ENCODE measurements at regions of chr3 and their contacts with region 1.

Region 1: GRCh38 chr3:38738630-38739395 is 77.2 kb downstream of the SCN10A start:
- DNase-seq: peak; percentile 47
- ATAC-seq: no peak
- H3K4me3 Mint-ChIP-seq: no peak overlapping the region
- H3K27ac Mint-ChIP-seq: no peak overlapping the region
- H3K4me1 Mint-ChIP-seq: no peaks in the 10 kb centered on the region
- H3K27me3 Mint-ChIP-seq: peaks cover 16% of the 10 kb centered on the region

Region 2: DNA sequence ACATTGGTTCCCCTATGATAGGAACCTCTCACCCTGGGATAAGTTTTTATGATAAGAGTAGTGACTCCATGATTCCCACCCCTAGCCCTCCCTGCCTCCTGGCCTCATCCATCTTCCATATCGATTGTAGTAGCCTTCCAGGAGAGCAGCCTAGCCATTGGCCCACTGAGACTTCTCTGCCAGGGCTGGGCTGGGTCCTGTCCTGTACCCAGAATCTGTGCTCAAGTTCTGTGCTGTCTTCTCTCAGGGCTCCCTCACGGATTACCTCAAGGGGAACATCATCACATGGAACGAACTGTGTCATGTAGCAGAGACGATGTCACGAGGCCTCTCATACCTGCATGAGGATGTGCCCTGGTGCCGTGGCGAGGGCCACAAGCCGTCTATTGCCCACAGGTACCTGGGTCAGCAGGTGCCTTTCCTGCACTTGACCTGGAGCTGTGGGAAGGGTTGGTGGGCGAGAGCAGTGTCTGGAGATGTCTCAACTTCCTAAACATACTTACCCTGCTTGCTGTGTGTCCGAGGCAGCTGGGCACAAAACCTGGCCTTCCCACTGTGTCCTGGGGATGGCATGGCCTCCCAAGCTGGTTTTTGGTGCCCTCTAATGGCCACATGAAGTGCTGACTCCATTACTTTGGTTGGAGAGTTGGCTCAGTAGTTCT is 259.3 kb before region 1 on chr3:
- CTCF ChIA-PET with region 1: no interaction called
- POLR2A ChIA-PET with region 1: no interaction called
- DNase-seq: peak; percentile 59
- ATAC-seq: peak; percentile 71
- H3K4me3 Mint-ChIP-seq: no peak overlapping the region
- H3K27ac Mint-ChIP-seq: no peak overlapping the region
- H3K4me1 Mint-ChIP-seq: no peaks in the 10 kb centered on the region
- H3K27me3 Mint-ChIP-seq: no peaks in the 10 kb centered on the region

Region 3: DNA sequence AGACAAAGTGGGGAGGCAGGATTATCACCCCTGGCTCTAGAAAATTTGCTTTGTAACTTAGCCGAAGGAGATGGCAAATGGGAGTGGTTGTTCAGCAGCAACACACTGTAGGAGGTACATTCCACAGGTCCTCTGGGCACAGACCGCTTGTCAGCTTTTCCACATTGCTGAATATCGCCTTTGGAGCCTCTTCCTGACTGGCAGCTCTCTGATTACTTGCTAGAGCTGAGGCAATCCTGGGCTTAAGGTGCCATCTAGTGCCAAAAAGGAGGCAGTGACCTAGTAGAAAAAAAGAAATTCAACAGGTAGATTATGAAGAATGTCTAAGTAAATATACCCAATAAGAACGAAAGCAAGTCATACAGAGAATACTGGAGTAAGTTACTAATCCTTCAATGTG is 76.3 kb before region 1 on chr3:
- CTCF ChIA-PET with region 1: no interaction called
- POLR2A ChIA-PET with region 1: no interaction called
- DNase-seq: no peak
- ATAC-seq: no peak
- H3K4me3 Mint-ChIP-seq: no peak overlapping the region
- H3K27ac Mint-ChIP-seq: no peak overlapping the region
- H3K4me1 Mint-ChIP-seq: no peaks in the 10 kb centered on the region
- H3K27me3 Mint-ChIP-seq: peaks cover 30% of the 10 kb centered on the region

Region 4: GRCh38 chr3:38837358-38837757 is 98.5 kb after region 1 on chr3:
- CTCF ChIA-PET with region 1: interaction called, 17 read pairs
- POLR2A ChIA-PET with region 1: interaction called, 3 read pairs
- DNase-seq: no peak
- ATAC-seq: no peak
- H3K4me3 Mint-ChIP-seq: no peak overlapping the region
- H3K27ac Mint-ChIP-seq: no peak overlapping the region
- H3K4me1 Mint-ChIP-seq: peaks cover 13% of the 10 kb centered on the region
- H3K27me3 Mint-ChIP-seq: peaks cover 12% of the 10 kb centered on the region

Region 5: DNA sequence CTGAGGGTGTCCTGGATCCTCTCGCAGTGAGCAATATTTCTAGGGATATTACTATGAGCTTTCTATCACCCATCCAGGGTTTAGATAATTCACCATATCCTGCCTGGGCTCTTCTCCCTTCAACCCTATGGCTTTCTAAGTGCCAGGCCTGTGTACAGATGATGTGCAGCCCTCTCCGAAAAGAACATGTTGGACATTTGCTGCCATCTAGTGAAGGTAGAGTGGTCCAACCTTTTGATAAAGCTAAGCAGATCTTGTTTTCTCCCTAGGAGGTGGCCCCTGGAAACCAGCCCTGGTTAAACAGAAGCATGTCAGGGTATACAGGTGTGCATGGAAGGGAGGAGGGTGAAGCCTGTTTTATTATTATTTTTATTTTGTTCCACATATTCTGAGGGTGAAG is 105.1 kb after region 1 on chr3:
- CTCF ChIA-PET with region 1: interaction called, 17 read pairs
- POLR2A ChIA-PET with region 1: interaction called, 3 read pairs
- DNase-seq: peak; percentile 27
- ATAC-seq: peak; percentile 42
- H3K4me3 Mint-ChIP-seq: no peak overlapping the region
- H3K27ac Mint-ChIP-seq: no peak overlapping the region
- H3K4me1 Mint-ChIP-seq: no peaks in the 10 kb centered on the region
- H3K27me3 Mint-ChIP-seq: peaks cover 16% of the 10 kb centered on the region